ENCODE measurements at regions of chr4 and their contacts with region 1.

Region 1: GRCh38 chr4:146638801-146639605 is at the start of gene POU4F2:
- DNase-seq: no peak
- H3K4me3 Mint-ChIP-seq: no peak within 1 kb of the TSS
- H3K27ac Mint-ChIP-seq: peak within 1 kb of the TSS; percentile 81
- H3K4me1 Mint-ChIP-seq: no peaks in the 10 kb centered on the region
- H3K27me3 Mint-ChIP-seq: peaks cover 69% of the 10 kb centered on the region
- total RNA-seq, gene POU4F2: not detected in 2 replicates

Region 2: GRCh38 chr4:146654687-146655520 is 15.9 kb after region 1 on chr4:
- intact Hi-C with region 1: loop called (anchors 2 kb)
- DNase-seq: no peak
- H3K4me3 Mint-ChIP-seq: peak overlapping the region; percentile 77
- H3K27ac Mint-ChIP-seq: no peak overlapping the region
- H3K4me1 Mint-ChIP-seq: peaks cover 6% of the 10 kb centered on the region
- H3K27me3 Mint-ChIP-seq: peaks cover 55% of the 10 kb centered on the region